PC-3 (cell line): ENCODE measurements at regions of chr3 and their contacts with region 1.

Region 1: DNA sequence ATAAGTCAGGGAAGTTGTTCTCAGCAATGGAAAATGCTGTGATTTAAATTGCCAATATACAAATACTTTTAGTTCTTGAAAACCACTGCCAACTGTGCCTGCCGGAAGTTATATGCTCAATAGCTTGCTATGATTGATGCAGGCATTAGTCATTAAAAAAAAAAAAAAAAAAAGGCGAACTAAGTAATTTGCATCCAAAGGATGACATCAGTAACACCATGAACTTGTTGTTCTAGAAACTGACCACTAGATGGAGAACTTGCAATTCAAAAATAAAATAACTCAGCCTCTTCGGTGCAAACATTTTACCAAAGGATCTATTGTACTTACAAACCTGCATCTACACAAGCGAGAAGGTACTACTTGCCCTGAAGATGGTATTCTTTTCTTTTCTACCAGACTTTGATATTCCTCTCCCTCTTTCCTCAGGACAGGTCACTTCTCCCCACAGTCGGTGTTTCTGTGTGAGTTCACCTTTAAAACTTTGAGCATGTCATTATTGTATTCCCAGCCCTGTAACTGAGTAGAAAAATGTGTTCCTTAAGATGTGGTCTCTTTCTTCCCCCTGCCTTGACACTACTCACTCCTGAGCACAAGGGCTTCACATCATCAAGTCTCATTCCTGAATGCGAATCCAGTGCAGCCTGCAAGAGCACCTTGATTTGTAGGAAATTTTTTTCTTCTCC is 115.0 kb upstream of the VEPH1 start:
- DNase-seq: peak; percentile 89
- ATAC-seq: peak; percentile 80
- H3K4me3 ChIP-seq: no peak overlapping the region
- H3K27ac ChIP-seq: no peak overlapping the region
- H3K4me1 ChIP-seq: peaks cover 5% of the 10 kb centered on the region; the same call in 1 of the 2 replicates
- H3K27me3 ChIP-seq: no peaks in the 10 kb centered on the region
- CTCF ChIP-seq: peak; percentile 77

Region 2: GRCh38 chr3:157606011-157606851 is 12.0 kb before region 1 on chr3:
- CTCF ChIA-PET with region 1: interaction called, 39 read pairs
- POLR2A ChIA-PET with region 1: interaction called, 36 read pairs
- intact Hi-C with region 1: no loop called
- DNase-seq: peak; percentile 90
- ATAC-seq: peak; percentile 99
- H3K4me3 ChIP-seq: peak overlapping the region; percentile 21; the same call in 1 of the 2 replicates
- H3K27ac ChIP-seq: no peak overlapping the region
- H3K4me1 ChIP-seq: peaks cover 4% of the 10 kb centered on the region; the same call in 1 of the 2 replicates
- H3K27me3 ChIP-seq: no peaks in the 10 kb centered on the region
- CTCF ChIP-seq: peak; percentile 93

Region 3: GRCh38 chr3:157660847-157661246 is 42.6 kb after region 1 on chr3:
- CTCF ChIA-PET with region 1: no interaction called
- POLR2A ChIA-PET with region 1: no interaction called
- intact Hi-C with region 1: no loop called
- DNase-seq: no peak
- ATAC-seq: no peak
- H3K4me3 ChIP-seq: no peak overlapping the region
- H3K27ac ChIP-seq: no peak overlapping the region
- H3K4me1 ChIP-seq: no peaks in the 10 kb centered on the region
- H3K27me3 ChIP-seq: no peaks in the 10 kb centered on the region
- CTCF ChIP-seq: no peak

Region 4: DNA sequence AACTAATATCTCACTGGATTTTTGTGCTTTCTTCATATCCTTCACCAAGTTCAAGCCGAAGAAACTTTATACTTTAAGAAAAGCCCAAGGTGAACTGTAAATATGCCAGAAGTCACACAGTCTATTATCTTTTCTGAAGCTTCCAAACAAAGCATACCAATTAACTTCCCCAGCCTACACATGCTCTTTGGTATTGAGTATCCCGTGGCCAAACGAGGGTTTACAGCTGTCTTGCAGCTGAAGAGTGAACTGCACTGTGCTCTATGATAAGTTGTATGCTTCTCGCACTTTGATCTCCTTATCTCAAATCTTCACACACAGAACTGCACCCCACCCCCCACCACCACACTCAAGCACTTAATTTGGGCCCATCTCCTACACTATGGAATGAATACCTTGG is 100.6 kb after region 1 on chr3:
- CTCF ChIA-PET with region 1: interaction called, 12 read pairs
- POLR2A ChIA-PET with region 1: no interaction called
- intact Hi-C with region 1: no loop called
- DNase-seq: no peak
- ATAC-seq: no peak
- H3K4me3 ChIP-seq: no peak overlapping the region
- H3K27ac ChIP-seq: no peak overlapping the region
- H3K4me1 ChIP-seq: 0 out of 2 replicates have a peak, but pooled peaks cover under 1% of the 10 kb centered on the region
- H3K27me3 ChIP-seq: no peaks in the 10 kb centered on the region
- CTCF ChIP-seq: no peak

Region 5: GRCh38 chr3:157906627-157907026 is 288.4 kb after region 1 on chr3:
- CTCF ChIA-PET with region 1: interaction called, 9 read pairs
- POLR2A ChIA-PET with region 1: no interaction called
- intact Hi-C with region 1: loop called (anchors 1 kb)
- DNase-seq: peak; percentile 57
- ATAC-seq: peak; percentile 98
- H3K4me3 ChIP-seq: no peak overlapping the region
- H3K27ac ChIP-seq: no peak overlapping the region
- H3K4me1 ChIP-seq: no peaks in the 10 kb centered on the region
- H3K27me3 ChIP-seq: no peaks in the 10 kb centered on the region
- CTCF ChIP-seq: peak; percentile 57

Region 6: DNA sequence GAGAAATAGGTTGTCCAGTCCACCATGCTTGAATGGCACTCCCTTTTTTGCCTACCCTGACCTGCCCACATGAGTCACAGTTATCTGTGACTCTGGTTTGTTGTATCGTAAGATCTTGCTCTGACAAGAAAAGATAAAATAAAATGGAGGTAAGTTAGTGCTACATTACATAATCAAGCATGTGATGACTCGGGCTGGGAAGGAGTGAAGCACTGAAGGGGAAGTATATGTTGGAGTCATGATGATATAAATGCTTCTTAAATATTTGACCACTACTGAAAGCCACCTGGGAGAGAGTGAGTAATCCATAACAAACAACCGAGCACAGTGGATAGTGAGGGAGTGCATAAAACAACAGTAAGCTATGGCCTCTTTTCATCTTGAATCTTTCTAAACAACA is 363.6 kb after region 1 on chr3:
- CTCF ChIA-PET with region 1: no interaction called
- POLR2A ChIA-PET with region 1: no interaction called
- intact Hi-C with region 1: loop called (anchors 5 kb)
- DNase-seq: peak; percentile 90
- ATAC-seq: peak; percentile 92
- H3K4me3 ChIP-seq: peak overlapping the region; percentile 11; the same call in 1 of the 2 replicates
- H3K27ac ChIP-seq: peak overlapping the region; percentile 92
- H3K4me1 ChIP-seq: peaks cover 34% of the 10 kb centered on the region
- H3K27me3 ChIP-seq: no peaks in the 10 kb centered on the region
- CTCF ChIP-seq: no peak

Region 7: DNA sequence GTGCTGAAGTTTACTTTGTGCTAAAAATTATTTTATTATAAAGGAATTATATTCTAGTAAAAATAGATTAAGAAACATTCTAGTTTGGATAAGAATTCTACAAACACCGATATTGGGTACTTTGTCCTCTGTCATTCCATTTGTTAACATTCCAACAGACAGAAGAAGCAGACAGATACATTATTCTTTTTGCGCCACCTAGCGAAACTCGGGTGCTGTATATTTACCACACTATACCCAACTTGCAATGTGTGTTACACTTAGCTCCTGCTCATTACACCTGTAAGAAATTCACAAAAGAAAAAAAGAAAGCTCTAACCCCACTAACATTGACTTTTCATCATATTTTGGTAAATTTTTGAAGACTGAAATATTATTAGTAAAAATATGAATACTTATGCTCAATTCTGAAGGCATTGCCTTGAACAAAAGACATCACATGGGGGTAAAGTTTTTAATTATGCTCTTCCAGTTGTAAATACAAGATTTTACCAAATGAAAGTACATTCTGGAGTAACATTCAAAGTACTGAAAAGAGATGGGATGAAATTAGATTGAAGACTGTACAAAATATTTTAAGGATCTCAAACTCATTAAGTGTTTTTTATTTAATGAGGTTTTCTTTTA is 816.3 kb after region 1 on chr3:
- CTCF ChIA-PET with region 1: no interaction called
- POLR2A ChIA-PET with region 1: no interaction called
- intact Hi-C with region 1: loop called (anchors 1 kb)
- DNase-seq: peak; percentile 73
- ATAC-seq: peak; percentile 73
- H3K4me3 ChIP-seq: no peak overlapping the region
- H3K27ac ChIP-seq: no peak overlapping the region
- H3K4me1 ChIP-seq: no peaks in the 10 kb centered on the region
- H3K27me3 ChIP-seq: no peaks in the 10 kb centered on the region
- CTCF ChIP-seq: peak; percentile 76